ENCODE measurements at regions of chr9 and their contacts with region 1.

Region 1: GRCh38 chr9:5566054-5566618 is 55.8 kb downstream of the PDCD1LG2 start:
- DNase-seq: peak; percentile 59 to 70 (median 61)
- H3K4me3 ChIP-seq: no peak overlapping the region
- H3K4me3 Mint-ChIP-seq: no peak overlapping the region
- H3K27ac ChIP-seq: peak overlapping the region; percentile 68 to 69
- H3K27ac Mint-ChIP-seq: peak overlapping the region; percentile 3 to 87 (median 75)
- H3K4me1 ChIP-seq: peaks cover 60 to 65% of the 10 kb centered on the region in 2 donors
- H3K4me1 Mint-ChIP-seq: peaks cover 69% of the 10 kb centered on the region
- H3K27me3 ChIP-seq: no peaks in the 10 kb centered on the region
- H3K27me3 Mint-ChIP-seq: no peaks in the 10 kb centered on the region
- CTCF ChIP-seq: no peak

Region 2: DNA sequence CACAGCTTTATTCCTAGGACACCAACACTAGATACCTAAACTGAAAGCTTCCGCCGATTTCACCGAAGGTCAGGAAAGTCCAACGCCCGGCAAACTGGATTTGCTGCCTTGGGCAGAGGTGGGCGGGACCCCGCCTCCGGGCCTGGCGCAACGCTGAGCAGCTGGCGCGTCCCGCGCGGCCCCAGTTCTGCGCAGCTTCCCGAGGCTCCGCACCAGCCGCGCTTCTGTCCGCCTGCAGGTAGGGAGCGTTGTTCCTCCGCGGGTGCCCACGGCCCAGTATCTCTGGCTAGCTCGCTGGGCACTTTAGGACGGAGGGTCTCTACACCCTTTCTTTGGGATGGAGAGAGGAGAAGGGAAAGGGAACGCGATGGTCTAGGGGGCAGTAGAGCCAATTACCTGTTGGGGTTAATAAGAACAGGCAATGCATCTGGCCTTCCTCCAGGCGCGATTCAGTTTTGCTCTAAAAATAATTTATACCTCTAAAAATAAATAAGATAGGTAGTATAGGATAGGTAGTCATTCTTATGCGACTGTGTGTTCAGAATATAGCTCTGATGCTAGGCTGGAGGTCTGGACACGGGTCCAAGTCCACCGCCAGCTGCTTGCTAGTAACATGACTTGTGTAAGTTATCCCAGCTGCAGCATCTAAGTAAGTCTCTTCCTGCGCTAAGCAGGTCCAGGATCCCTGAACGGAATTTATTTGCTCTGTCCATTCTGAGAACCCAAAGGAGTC is 115.6 kb before region 1 on chr9 and contains the start of gene CD274:
- intact Hi-C with region 1: loop called (anchors 10 kb)
- DNase-seq: peak; percentile 65 to 91 (median 66)
- H3K4me3 ChIP-seq: peak within 1 kb of the TSS; percentile 76 to 94 (median 82)
- H3K4me3 Mint-ChIP-seq: peak within 1 kb of the TSS; percentile 81 to 93
- H3K27ac ChIP-seq: peak within 1 kb of the TSS; percentile 59 to 85
- H3K27ac Mint-ChIP-seq: peak within 1 kb of the TSS; percentile 87 to 93 (median 89)
- H3K4me1 ChIP-seq: peaks cover 39 to 47% of the 10 kb centered on the region in 2 donors
- H3K4me1 Mint-ChIP-seq: peaks cover 39% of the 10 kb centered on the region
- H3K27me3 ChIP-seq: no peaks in the 10 kb centered on the region
- H3K27me3 Mint-ChIP-seq: peaks cover 0 to 3% (median 0%) of the 10 kb centered on the region in 3 donors
- CTCF ChIP-seq: peak; percentile 62
- polyA plus RNA-seq, gene CD274: 0.24 to 0.84 TPM in 2 of 3 donors, not detected in the other

Region 3: DNA sequence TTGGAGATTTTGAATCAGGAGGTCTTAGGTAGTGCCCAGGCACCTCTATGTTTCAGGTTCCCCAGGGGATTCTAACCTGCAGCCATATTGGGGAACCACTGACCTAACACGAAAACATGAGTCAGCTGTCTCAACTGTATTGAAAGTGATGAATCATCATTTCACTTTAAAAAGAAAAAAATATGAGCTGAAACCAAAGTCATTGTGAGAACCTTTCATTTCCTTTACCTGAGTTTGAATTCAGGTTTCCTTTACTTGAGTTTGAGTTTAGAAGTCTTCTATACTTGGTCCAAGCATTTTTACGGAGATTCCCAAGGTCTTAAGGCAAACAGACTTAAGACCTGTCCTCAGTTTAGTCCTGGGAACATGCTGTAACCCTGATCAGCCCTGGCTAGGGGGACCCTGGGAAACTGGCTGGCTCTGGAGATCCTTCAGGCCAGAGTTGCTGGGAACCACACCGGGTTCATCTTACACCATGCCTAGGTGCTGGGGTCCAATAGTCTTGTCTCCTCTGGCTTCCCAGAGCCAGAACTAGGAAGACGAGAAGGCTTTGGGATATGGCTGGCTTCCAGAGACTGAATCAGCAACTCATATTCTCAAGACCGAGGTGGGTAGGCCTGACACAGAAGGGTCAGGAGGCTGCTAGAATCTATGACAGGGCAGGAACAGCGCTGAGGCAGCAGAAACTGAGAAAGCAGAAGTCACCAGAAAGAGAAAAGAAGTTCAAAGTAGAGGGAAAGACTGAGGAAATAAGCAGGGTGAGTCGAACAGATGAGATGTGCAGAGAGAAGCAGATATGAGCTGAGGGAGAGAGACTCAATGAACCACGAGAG is 72.2 kb before region 1 on chr9:
- intact Hi-C with region 1: loop called in 1 of 2 experiments (anchors 5 kb)
- DNase-seq: peak; percentile 74 to 86 (median 75)
- H3K4me3 ChIP-seq: peak overlapping the region in 2 of 3 experiments; percentile 10 to 62
- H3K4me3 Mint-ChIP-seq: peak overlapping the region; percentile 20 to 69
- H3K27ac ChIP-seq: peak overlapping the region; percentile 88
- H3K27ac Mint-ChIP-seq: peak overlapping the region; percentile 81 to 93 (median 90)
- H3K4me1 ChIP-seq: peaks cover 29 to 31% of the 10 kb centered on the region in 2 donors
- H3K4me1 Mint-ChIP-seq: peaks cover 31% of the 10 kb centered on the region
- H3K27me3 ChIP-seq: no peaks in the 10 kb centered on the region
- H3K27me3 Mint-ChIP-seq: no peaks in the 10 kb centered on the region
- CTCF ChIP-seq: no peak

Region 4: GRCh38 chr9:5510360-5510931 is 55.7 kb before region 1 on chr9 and contains the start of gene PDCD1LG2:
- intact Hi-C with region 1: loop called in 1 of 2 experiments (anchors 10 kb)
- DNase-seq: peak; percentile 49 to 80 (median 75)
- H3K4me3 ChIP-seq: peak within 1 kb of the TSS in 2 of 3 experiments; percentile 43 to 52
- H3K4me3 Mint-ChIP-seq: peak within 1 kb of the TSS; percentile 70 to 84
- H3K27ac ChIP-seq: peak within 1 kb of the TSS; percentile 47 to 82
- H3K27ac Mint-ChIP-seq: peak within 1 kb of the TSS; percentile 92 to 96 (median 94)
- H3K4me1 ChIP-seq: peaks cover 44 to 58% of the 10 kb centered on the region in 2 donors
- H3K4me1 Mint-ChIP-seq: peaks cover 59% of the 10 kb centered on the region
- H3K27me3 ChIP-seq: no peaks in the 10 kb centered on the region
- H3K27me3 Mint-ChIP-seq: peaks cover 0 to 2% (median 0%) of the 10 kb centered on the region in 3 donors
- CTCF ChIP-seq: no peak
- polyA plus RNA-seq, gene PDCD1LG2: 0.16 to 0.41 (median 0.17) TPM

Region 5: DNA sequence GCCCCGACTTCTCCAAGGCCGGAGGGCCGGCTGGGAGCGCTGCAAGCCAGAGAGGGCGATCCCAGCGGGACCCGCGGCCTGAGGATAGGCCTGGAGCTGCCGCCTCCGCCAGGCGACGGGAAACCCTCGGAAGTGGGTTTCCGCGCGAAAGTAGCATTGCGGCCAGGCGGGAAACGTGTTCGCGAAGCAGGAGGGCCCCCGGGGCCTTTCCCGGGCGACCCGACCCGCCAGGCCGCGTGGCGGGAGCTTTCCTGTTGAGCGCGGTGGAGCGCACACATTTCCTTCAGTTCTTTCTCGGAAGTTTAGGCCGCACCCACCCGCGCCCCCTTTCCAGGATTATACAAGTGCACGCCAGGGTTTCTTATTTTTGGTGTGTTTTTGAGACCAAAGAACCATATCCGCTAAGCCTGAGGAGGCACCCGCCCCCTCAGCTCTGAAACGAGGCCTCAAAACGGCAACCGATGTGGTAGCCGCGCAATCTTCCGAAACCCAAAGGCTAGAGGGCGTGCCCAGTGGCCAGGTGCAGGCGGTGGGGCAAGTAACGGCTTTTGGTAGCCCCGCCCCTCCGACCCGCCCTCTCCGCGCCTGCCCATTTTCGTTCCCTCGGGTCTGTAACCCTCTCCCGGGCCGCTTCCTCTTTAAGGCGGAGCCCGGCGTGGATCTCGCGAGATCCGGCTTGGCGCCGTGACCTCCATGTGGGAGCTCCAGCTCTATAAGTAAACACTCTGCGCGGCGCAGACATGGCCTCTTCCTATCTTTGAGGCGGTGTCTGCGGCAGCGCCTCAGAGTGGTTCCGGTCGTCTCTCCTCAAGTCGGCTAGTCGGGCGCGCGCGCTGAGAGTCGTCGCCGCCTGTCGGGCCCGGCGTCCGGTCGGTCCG is 846.6 kb after region 1 on chr9 and contains the start of gene UHRF2:
- intact Hi-C with region 1: no loop called
- DNase-seq: peak; percentile 96 to 99 (median 97)
- H3K4me3 ChIP-seq: peak within 1 kb of the TSS; percentile 55 to 88 (median 81)
- H3K4me3 Mint-ChIP-seq: peak within 1 kb of the TSS; percentile 87 to 94
- H3K27ac ChIP-seq: peak within 1 kb of the TSS; percentile 36 to 84
- H3K27ac Mint-ChIP-seq: peak within 1 kb of the TSS; percentile 78 to 87 (median 85)
- H3K4me1 ChIP-seq: peaks cover 33 to 58% of the 10 kb centered on the region in 2 donors
- H3K4me1 Mint-ChIP-seq: peaks cover 34% of the 10 kb centered on the region
- H3K27me3 ChIP-seq: no peaks in the 10 kb centered on the region
- H3K27me3 Mint-ChIP-seq: peaks cover 0 to 1% (median 0%) of the 10 kb centered on the region in 3 donors
- CTCF ChIP-seq: no peak
- polyA plus RNA-seq, gene UHRF2: 1.6 to 36.4 (median 7.7) TPM